ENCODE measurements at regions of chr5 and their contacts with region 1.

Region 1: DNA sequence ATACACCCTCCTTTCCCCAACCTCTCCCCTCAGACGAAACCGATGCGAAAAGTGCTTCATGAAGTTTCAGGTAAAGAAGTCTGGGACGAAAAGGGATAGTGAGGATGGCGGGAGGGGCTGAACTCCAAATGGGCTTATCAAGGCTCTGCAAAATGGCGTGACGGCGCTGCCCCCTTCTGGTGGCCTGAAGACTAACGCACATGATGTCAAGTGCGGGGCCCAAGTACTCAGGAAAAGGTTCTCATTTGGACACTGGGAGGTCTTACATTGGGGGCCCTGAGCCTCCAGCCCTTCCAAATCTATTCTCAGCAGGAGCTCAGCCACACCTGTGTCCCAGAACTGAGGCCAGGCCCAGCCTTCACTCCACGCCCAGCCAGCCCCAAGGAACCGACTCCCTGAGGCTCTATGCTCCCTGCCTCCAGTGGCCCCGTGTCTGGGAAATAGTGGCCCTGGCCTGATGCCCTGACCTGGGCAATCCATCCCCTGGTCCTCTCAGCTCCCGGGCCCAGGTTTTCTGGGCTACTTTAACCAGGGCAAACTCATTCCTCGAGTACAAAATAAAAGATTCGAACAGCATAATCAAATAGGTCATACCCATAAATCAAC is 119.9 kb downstream of the KCNIP1 start:
- DNase-seq: peak; percentile 61
- H3K4me3 ChIP-seq: no peak overlapping the region
- H3K27ac ChIP-seq: no peak overlapping the region
- H3K4me1 ChIP-seq: no peaks in the 10 kb centered on the region
- H3K27me3 ChIP-seq: peaks cover 2 to 3% of the 10 kb centered on the region in 2 experiments
- CTCF ChIP-seq: peak; percentile 74 to 87
- POLR2A ChIP-seq: no peak

Region 2: DNA sequence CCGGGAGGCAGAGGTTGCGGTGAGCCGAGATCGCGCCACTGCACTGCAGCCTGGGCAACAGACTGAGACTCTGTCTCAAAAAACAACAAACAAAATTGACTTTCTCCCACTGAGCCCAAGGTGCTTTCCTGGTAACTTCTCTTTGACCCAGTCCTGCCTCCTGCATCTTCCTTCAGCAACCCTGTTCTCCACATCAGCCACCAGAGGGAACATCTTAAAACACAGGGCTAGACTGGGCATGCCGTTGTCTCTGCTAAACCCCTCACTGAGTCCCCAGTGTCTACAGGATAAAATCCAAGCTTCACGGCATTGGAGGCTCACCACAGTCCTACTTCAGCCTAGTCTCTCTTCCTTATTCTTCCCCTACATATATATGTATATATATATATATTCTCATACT is 194.7 kb before region 1 on chr5:
- CTCF ChIA-PET with region 1: interaction called, 288 read pairs
- POLR2A ChIA-PET with region 1: no interaction called
- dilution Hi-C with region 1: no loop called
- intact Hi-C with region 1: no loop called
- DNase-seq: no peak
- H3K4me3 ChIP-seq: no peak overlapping the region
- H3K27ac ChIP-seq: no peak overlapping the region
- H3K4me1 ChIP-seq: no peaks in the 10 kb centered on the region
- H3K27me3 ChIP-seq: peaks cover 8 to 10% of the 10 kb centered on the region in 2 experiments
- CTCF ChIP-seq: peak in 1 of 2 donors; percentile 19
- POLR2A ChIP-seq: no peak

Region 3: GRCh38 chr5:170479484-170479883 is 144.2 kb before region 1 on chr5:
- CTCF ChIA-PET with region 1: interaction called, 5 read pairs
- POLR2A ChIA-PET with region 1: no interaction called
- dilution Hi-C with region 1: no loop called
- intact Hi-C with region 1: loop called (anchors 1 kb)
- DNase-seq: peak; percentile 71
- H3K4me3 ChIP-seq: no peak overlapping the region
- H3K27ac ChIP-seq: peak overlapping the region; percentile 52
- H3K4me1 ChIP-seq: peaks cover 6% of the 10 kb centered on the region
- H3K27me3 ChIP-seq: no peaks in the 10 kb centered on the region
- CTCF ChIP-seq: peak in 1 of 2 donors; percentile 12
- POLR2A ChIP-seq: no peak